Activated naive CD4-positive, alpha-beta T cell treated with anti-CD3 and anti-CD28 coated beads for 36 hours (primary cell): ENCODE measurements at regions of chr19 and their contacts with region 1.

Region 1: GRCh38 chr19:40716655-40717324 is at the starts of genes COQ8B and ITPKC:
- DNase-seq: peak; percentile 100
- H3K4me3 Mint-ChIP-seq: peak within 1 kb of the TSS; percentile 95
- H3K27ac Mint-ChIP-seq: peak within 1 kb of the TSS; percentile 97
- H3K4me1 Mint-ChIP-seq: peaks cover 54% of the 10 kb centered on the region
- H3K27me3 Mint-ChIP-seq: no peaks in the 10 kb centered on the region
- total RNA-seq, gene COQ8B: 19.8 to 21.3 TPM
- total RNA-seq, gene ITPKC: 4.4 to 4.7 TPM

Region 2: GRCh38 chr19:40425450-40426287 is 291.1 kb before region 1 on chr19 and contains the start of gene SERTAD1:
- CTCF ChIA-PET with region 1: no interaction called
- intact Hi-C with region 1: loop called (anchors 5 kb)
- DNase-seq: peak; percentile 100
- H3K4me3 Mint-ChIP-seq: peak within 1 kb of the TSS; percentile 89
- H3K27ac Mint-ChIP-seq: peak within 1 kb of the TSS; percentile 97
- H3K4me1 Mint-ChIP-seq: peaks cover 21% of the 10 kb centered on the region
- H3K27me3 Mint-ChIP-seq: no peaks in the 10 kb centered on the region
- total RNA-seq, gene SERTAD1: 8.8 to 9.2 TPM

Region 3: DNA sequence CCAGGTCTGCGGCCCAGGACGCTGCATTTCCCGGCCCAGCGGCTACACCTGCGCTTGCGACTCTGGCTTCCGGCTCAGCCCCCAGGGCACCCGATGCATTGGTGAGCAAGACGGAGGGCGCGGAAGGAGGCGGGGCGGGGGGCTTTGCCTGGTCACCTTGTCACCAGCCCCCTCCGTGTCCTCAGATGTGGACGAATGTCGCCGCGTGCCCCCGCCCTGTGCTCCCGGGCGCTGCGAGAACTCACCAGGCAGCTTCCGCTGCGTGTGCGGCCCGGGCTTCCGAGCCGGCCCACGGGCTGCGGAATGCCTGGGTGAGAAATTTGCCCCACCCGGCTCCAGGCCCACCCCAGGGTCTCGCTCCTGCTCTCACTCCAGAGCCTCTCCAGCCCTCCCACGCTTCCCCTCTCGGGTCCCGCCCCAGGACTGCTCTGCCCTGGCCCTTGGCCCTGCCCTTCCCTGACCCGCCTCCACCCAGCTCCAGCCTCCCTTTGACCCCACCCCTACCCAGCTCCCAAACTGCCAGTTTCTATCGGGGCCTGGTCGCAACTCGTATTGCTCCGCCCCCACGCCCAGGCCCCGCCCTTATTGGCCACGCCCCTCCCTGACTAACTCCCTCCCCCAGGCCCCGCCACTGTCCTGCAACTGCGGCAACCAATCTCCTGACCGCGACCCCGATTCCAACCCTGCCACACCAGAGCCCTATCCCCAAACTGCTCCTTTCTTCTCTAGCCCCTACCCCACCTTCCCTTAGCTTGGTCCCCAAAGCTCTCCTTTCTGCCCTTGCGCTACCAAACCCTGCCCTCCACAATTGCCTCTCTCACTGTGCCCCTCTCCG is 107.0 kb before region 1 on chr19:
- CTCF ChIA-PET with region 1: no interaction called
- intact Hi-C with region 1: loop called (anchors 2 kb)
- DNase-seq: peak; percentile 97
- H3K4me3 Mint-ChIP-seq: peak overlapping the region; percentile 89
- H3K27ac Mint-ChIP-seq: peak overlapping the region; percentile 91
- H3K4me1 Mint-ChIP-seq: peaks cover 67% of the 10 kb centered on the region
- H3K27me3 Mint-ChIP-seq: no peaks in the 10 kb centered on the region

Region 4: GRCh38 chr19:40677156-40677555 is 39.6 kb before region 1 on chr19:
- CTCF ChIA-PET with region 1: no interaction called
- intact Hi-C with region 1: no loop called
- DNase-seq: no peak
- H3K4me3 Mint-ChIP-seq: no peak overlapping the region
- H3K27ac Mint-ChIP-seq: no peak overlapping the region
- H3K4me1 Mint-ChIP-seq: no peaks in the 10 kb centered on the region
- H3K27me3 Mint-ChIP-seq: no peaks in the 10 kb centered on the region

Region 5: DNA sequence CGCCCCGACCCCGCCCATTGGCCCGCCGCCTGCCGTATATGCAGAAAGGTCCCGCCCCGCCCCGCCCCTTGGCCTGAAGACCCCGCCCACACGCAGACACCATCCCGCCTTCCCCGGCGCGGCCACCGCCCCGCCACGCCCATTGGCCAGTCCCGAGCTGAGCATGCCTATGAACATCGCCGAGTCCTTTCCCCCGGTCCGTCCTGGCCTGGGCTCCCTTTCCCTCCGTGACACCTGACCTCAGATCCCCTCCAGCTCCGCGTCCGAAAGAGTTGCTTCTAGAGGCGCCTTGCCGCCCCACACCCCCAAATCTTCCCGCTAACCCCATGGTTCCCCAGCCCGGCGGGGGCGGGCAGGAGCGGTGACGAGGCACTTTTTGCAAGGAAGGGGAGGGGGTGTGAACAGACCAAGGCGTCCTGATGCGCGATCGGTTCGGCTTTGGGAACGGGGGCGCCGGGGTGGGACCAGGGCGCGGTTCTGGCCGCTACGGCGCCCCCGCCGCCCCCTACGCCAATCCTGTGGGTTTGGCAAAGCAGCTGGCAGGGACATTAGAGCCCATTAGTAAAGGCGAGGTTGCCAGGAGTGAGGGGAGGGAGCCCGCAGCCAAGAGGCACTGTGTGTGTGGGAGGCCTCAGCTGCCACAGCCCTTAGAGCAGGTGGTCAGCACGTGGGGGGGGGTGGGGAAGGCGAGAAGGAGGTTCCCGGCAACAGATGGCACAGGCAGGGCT is 25.9 kb before region 1 on chr19:
- CTCF ChIA-PET with region 1: no interaction called
- intact Hi-C with region 1: loop called (anchors 1 kb)
- DNase-seq: peak; percentile 93
- H3K4me3 Mint-ChIP-seq: peak overlapping the region; percentile 87
- H3K27ac Mint-ChIP-seq: peak overlapping the region; percentile 95
- H3K4me1 Mint-ChIP-seq: peaks cover 7% of the 10 kb centered on the region
- H3K27me3 Mint-ChIP-seq: no peaks in the 10 kb centered on the region

Region 6: DNA sequence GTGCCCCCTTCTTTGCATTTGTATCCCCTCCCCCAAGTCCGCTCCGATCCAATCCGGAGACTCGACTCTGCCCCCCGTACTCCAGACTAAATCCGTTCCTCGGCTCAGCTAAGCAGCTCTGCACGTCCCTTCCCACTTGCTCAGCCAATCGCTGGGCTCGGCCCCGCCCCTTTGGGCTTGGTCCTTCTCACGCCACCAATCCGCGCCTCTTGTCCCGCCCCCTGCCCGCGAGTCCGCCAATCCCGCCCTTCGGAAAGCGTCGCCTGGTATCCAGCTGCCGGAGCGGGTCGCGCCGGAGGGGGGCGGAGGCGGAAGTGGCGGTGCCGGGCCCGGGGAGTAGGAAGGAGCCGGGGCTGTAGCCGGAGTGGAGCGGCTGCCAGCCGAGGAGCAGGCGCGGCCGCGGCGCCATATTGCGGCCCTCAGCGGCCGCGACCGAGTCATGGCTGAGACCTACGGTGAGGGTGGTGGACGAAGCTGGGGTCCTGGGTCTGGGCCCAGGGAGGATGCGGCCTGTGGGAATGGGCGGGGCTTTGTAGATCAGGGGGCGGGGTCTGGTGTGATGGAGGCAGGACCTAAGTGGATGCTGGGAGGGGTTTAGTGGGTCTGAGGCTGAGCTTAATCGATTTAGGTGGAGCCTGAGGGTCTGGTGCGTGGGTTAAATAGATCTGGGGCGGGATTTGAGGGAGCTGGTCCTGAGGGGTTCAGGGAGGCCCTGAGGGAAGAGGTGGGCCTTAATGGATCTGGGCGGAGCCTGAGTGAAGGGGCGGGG is 61.3 kb after region 1 on chr19 and contains the start of gene RAB4B:
- CTCF ChIA-PET with region 1: interaction called, 3 read pairs
- intact Hi-C with region 1: loop called (anchors 1 kb)
- DNase-seq: peak; percentile 100
- H3K4me3 Mint-ChIP-seq: peak within 1 kb of the TSS; percentile 85
- H3K27ac Mint-ChIP-seq: peak within 1 kb of the TSS; percentile 91
- H3K4me1 Mint-ChIP-seq: peaks cover 39% of the 10 kb centered on the region
- H3K27me3 Mint-ChIP-seq: no peaks in the 10 kb centered on the region
- total RNA-seq, gene RAB4B: 40.0 to 40.3 TPM

Region 7: DNA sequence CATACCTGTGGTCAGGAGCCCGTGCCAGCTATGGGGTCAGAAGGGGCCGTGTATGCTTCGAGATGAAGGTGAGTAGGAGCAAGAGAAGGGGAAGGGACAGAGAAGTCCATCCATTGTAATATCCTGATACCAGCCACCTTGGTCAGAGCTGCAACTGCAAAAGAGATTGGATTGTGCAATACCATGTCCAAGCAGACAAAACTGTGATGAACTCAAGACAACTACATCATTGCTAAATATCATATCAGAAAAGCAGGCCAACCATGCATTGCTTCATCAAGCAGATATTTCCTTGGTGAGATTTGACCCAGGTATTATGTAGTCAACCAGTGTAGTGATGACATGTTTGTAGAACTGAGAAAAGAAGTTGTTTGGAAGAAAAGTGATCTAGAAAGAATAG is 559.4 kb after region 1 on chr19:
- CTCF ChIA-PET with region 1: no interaction called
- intact Hi-C with region 1: no loop called
- DNase-seq: no peak
- H3K4me3 Mint-ChIP-seq: no peak overlapping the region
- H3K27ac Mint-ChIP-seq: no peak overlapping the region
- H3K4me1 Mint-ChIP-seq: no peaks in the 10 kb centered on the region
- H3K27me3 Mint-ChIP-seq: no peaks in the 10 kb centered on the region

Region 8: DNA sequence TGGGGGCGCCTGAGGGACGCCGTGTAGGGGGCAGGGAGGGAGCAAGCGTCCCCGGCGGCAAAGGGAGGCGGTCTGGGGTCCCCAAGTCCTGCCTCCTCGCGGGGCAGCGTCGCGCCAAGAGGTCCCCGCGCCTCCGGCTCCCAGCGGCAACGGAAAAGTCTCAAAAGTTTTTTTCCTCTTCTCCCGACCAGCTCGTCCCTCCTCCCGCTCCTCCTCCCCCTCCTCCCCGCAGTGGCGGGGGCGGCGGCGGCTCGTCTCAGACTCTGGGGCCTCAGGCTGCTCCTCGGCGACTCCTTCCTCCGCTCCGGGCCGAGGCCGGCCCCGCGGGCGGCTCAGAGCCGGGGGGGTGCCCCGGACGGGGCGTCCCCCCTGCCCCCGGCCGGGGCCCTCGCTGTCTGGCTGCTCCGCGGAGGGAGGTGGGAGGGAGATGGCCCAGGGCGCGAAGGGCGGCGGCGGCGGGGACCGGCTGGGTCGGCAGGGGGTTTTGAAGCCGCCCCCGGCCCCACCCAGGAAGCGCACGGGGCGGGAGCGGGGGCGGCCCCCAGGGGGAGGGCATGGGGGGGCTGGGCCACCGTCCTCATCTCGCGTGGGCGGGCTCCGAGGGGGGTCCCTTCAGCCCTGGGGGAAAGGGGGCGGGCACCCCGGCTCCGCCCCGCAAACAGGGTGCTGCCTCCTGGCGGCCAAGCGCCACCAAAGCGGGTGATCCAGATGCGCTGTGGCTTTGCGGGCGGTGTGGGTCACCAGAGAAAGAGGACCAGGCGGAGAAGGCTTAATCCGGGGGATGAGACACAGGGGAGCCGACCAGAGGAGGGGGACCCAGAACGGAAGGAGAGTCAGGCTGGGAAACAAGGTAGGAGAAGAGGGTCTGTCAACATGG is 636.9 kb after region 1 on chr19 and contains the start of gene TGFB1:
- CTCF ChIA-PET with region 1: no interaction called
- intact Hi-C with region 1: loop called (anchors 5 kb)
- DNase-seq: peak; percentile 94
- H3K4me3 Mint-ChIP-seq: peak within 1 kb of the TSS; percentile 91
- H3K27ac Mint-ChIP-seq: peak within 1 kb of the TSS; percentile 97
- H3K4me1 Mint-ChIP-seq: peaks cover 60% of the 10 kb centered on the region
- H3K27me3 Mint-ChIP-seq: no peaks in the 10 kb centered on the region
- total RNA-seq, gene TGFB1: 94.4 to 95.6 TPM